CD4-positive, alpha-beta memory T cell (primary cell): ENCODE measurements at regions of chr12 and their contacts with region 1.

Region 1: DNA sequence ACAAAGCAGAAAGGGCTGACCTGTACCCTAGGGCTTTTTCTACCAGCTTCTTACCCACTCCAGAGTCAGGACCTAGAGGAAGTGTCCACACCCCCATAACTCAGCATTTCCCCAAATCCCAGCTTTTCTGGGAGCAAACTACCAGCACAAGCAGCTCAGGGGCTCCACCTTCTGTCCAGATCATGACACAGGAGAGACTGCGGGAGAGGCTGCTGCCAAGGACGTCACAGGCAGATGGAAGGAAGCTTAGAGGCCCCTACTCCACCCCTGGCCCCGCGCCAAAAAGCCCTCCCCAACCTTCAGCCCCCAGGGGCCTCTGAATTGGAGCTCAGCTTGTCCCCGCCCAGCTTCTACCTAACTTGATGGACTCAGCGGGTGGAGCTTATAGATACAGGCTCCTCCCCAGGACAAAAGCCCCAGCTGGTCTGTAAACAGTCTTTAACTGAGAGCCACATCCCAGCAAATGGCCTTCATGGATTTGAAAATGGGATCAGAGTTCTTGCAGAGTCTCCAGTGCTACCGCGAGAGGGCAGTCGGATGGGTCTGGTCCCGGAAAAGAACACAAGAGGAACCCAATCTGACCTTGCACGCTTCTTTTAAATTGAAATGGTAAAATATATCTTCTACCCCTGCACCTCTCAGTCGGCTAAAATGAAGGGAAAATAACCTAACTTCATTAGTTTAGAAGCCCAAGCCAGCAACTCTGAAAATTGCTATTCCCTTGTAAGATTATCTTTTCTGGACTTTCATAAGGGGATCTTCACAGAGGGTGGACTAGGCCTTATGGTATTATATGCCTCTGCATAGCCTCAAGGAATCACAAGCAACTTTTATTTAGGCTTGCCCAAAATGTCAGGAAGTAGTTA is 6.8 kb upstream of the BAZ2A start:
- DNase-seq: peak; percentile 93 to 99 (median 96)
- H3K4me3 ChIP-seq: peak overlapping the region; percentile 58 to 64
- H3K4me3 Mint-ChIP-seq: peak overlapping the region; percentile 86 to 99 (median 96)
- H3K27ac ChIP-seq: peak overlapping the region; percentile 81
- H3K27ac Mint-ChIP-seq: peak overlapping the region; percentile 82 to 99 (median 97)
- H3K4me1 ChIP-seq: peaks cover 44% of the 10 kb centered on the region
- H3K4me1 Mint-ChIP-seq: peaks cover 31 to 59% (median 46%) of the 10 kb centered on the region in 4 donors
- H3K27me3 ChIP-seq: no peaks in the 10 kb centered on the region
- H3K27me3 Mint-ChIP-seq: no peaks in the 10 kb centered on the region

Region 2: GRCh38 chr12:55829967-55830600 is 806.8 kb before region 1 on chr12:
- CTCF ChIA-PET with region 1: no interaction called
- POLR2A ChIA-PET with region 1: no interaction called
- intact Hi-C with region 1: loop called (anchors 10 kb)
- DNase-seq: peak in 4 of 5 donors; percentile 18 to 55 (median 22)
- H3K4me3 ChIP-seq: peak overlapping the region; percentile 88 to 93
- H3K4me3 Mint-ChIP-seq: peak overlapping the region; percentile 95 to 99 (median 98)
- H3K27ac ChIP-seq: peak overlapping the region; percentile 59
- H3K27ac Mint-ChIP-seq: peak overlapping the region; percentile 89 to 97 (median 95)
- H3K4me1 ChIP-seq: peaks cover 54% of the 10 kb centered on the region
- H3K4me1 Mint-ChIP-seq: peaks cover 28 to 66% (median 41%) of the 10 kb centered on the region in 4 donors
- H3K27me3 ChIP-seq: no peaks in the 10 kb centered on the region
- H3K27me3 Mint-ChIP-seq: no peaks in the 10 kb centered on the region

Region 3: GRCh38 chr12:56541631-56542030 is 95.3 kb before region 1 on chr12:
- CTCF ChIA-PET with region 1: no interaction called
- POLR2A ChIA-PET with region 1: no interaction called
- intact Hi-C with region 1: no loop called
- DNase-seq: no peak
- H3K4me3 ChIP-seq: no peak overlapping the region
- H3K4me3 Mint-ChIP-seq: no peak overlapping the region
- H3K27ac ChIP-seq: no peak overlapping the region
- H3K27ac Mint-ChIP-seq: no peak overlapping the region
- H3K4me1 ChIP-seq: no peaks in the 10 kb centered on the region
- H3K4me1 Mint-ChIP-seq: peaks cover 0 to 2% (median 0%) of the 10 kb centered on the region in 4 donors
- H3K27me3 ChIP-seq: no peaks in the 10 kb centered on the region
- H3K27me3 Mint-ChIP-seq: no peaks in the 10 kb centered on the region

Region 4: DNA sequence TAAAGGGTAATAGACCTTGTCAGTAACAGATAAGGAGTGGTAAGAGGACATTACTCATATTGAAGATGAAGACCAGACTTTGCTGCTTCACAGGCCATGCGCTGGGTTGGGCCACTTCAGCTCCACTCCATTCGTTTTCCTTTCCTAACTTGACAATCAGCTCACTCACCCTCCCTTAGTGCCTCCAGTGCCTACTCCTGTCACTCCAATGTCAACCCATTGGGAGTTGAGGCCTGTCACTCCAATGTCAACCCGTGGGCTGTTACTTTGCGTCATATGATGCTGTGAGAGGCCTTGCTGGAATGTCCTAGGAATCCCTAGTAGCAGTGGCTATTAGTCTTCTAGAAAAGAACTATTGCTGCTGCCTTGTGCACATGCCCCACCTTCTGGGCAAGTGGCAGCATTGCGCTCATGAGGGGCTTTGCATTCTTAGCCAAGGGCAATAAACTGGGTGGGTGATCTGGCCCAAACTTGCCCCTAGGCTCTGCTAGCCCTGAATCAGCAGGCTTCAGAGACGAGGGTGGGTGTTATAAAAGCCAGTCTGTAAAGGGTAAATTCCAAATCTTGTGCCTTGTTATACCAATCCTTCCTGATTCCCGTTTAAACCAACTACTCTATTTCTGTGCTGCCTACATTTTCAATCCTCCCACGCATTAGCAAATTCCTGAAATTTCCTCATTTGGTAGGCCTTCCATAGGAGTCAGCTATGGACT is 42.8 kb before region 1 on chr12:
- CTCF ChIA-PET with region 1: interaction called, 30 read pairs
- POLR2A ChIA-PET with region 1: interaction called, 4 read pairs
- intact Hi-C with region 1: no loop called
- DNase-seq: peak; percentile 44 to 71 (median 53)
- H3K4me3 ChIP-seq: no peak overlapping the region
- H3K4me3 Mint-ChIP-seq: no peak overlapping the region
- H3K27ac ChIP-seq: no peak overlapping the region
- H3K27ac Mint-ChIP-seq: peak overlapping the region in 3 of 7 donors; percentile 2 to 77 (median 49)
- H3K4me1 ChIP-seq: no peaks in the 10 kb centered on the region
- H3K4me1 Mint-ChIP-seq: peaks cover 0 to 4% (median 2%) of the 10 kb centered on the region in 4 donors
- H3K27me3 ChIP-seq: no peaks in the 10 kb centered on the region
- H3K27me3 Mint-ChIP-seq: no peaks in the 10 kb centered on the region

Region 5: DNA sequence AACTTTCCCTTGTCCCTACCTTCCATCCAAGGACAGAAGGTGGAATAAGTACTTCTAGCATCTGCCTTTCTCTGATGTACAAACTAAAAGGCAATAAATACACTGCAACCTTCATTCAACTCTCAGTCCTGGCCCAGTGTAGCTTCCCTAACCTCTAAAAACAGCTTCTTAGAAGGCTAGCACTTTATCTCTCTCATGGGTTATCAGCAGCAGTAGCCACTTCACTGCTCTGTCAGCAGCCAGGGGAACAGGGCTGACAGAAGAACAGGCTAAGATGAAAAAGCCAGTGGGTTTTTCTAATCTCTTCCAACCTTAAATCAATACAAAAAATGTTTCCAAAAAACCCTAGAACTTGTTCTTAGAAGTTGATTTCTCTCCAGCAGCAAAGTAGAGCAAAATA is 20.0 kb before region 1 on chr12:
- CTCF ChIA-PET with region 1: interaction called, 68 read pairs
- POLR2A ChIA-PET with region 1: interaction called, 67 read pairs
- intact Hi-C with region 1: no loop called
- DNase-seq: no peak
- H3K4me3 ChIP-seq: no peak overlapping the region
- H3K4me3 Mint-ChIP-seq: no peak overlapping the region
- H3K27ac ChIP-seq: no peak overlapping the region
- H3K27ac Mint-ChIP-seq: peak overlapping the region in 3 of 7 donors; percentile 23 to 66 (median 48)
- H3K4me1 ChIP-seq: peaks cover 21% of the 10 kb centered on the region
- H3K4me1 Mint-ChIP-seq: peaks cover 15 to 40% (median 24%) of the 10 kb centered on the region in 4 donors
- H3K27me3 ChIP-seq: no peaks in the 10 kb centered on the region
- H3K27me3 Mint-ChIP-seq: no peaks in the 10 kb centered on the region

Region 6: GRCh38 chr12:56677680-56678079 is 40.8 kb after region 1 on chr12:
- CTCF ChIA-PET with region 1: interaction called, 40 read pairs
- POLR2A ChIA-PET with region 1: interaction called, 210 read pairs
- intact Hi-C with region 1: no loop called
- DNase-seq: no peak
- H3K4me3 ChIP-seq: no peak overlapping the region
- H3K4me3 Mint-ChIP-seq: peak overlapping the region in 4 of 8 donors; percentile 2 to 44 (median 30)
- H3K27ac ChIP-seq: no peak overlapping the region
- H3K27ac Mint-ChIP-seq: peak overlapping the region in 5 of 7 donors; percentile 51 to 77 (median 53)
- H3K4me1 ChIP-seq: peaks cover 93% of the 10 kb centered on the region
- H3K4me1 Mint-ChIP-seq: peaks cover 40 to 86% (median 62%) of the 10 kb centered on the region in 4 donors
- H3K27me3 ChIP-seq: no peaks in the 10 kb centered on the region
- H3K27me3 Mint-ChIP-seq: no peaks in the 10 kb centered on the region

Region 7: DNA sequence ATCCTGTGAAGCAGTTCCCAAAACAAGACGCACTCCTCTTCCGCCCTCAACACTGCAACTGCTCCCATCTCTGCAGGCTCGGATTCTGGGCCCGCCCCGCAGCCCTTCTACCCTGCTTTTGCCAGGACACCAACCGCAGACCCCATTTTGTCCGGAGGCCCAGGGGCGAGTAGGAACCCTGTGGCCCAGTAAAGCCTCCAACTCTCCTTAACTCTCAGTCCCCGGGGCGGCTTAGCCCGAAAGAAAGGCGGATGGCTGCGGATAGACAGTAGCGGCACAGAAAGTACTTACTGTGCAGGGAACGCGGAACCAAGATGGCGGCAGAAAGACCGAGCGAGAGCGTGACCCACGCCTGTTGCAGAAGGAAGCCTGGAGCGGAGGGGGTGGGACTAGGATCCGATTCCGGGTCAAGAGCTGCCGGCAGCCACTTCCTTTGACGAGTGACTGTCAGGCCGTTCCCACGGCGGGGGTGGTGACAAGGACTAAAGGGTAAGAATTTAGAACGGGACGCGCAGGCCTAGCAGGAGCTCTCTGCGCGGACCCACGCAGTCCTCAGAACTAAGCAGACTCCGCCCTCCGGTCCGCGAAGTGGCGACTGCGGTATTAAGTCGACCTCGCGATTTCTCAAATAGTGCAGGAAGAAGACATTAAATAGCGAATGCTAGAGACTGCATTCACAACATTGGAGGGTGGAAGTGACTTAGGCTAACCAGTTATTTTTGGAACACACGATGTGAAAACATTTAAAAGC is 88.2 kb after region 1 on chr12 and contains the start of gene NACA:
- CTCF ChIA-PET with region 1: interaction called, 8 read pairs
- POLR2A ChIA-PET with region 1: interaction called, 21 read pairs
- intact Hi-C with region 1: loop called (anchors 2 kb)
- DNase-seq: peak; percentile 94 to 100 (median 98)
- H3K4me3 ChIP-seq: peak within 1 kb of the TSS; percentile 90 to 100
- H3K4me3 Mint-ChIP-seq: peak within 1 kb of the TSS; percentile 90 to 99 (median 98)
- H3K27ac ChIP-seq: peak within 1 kb of the TSS; percentile 90
- H3K27ac Mint-ChIP-seq: peak within 1 kb of the TSS; percentile 92 to 99 (median 97)
- H3K4me1 ChIP-seq: peaks cover 54% of the 10 kb centered on the region
- H3K4me1 Mint-ChIP-seq: peaks cover 41 to 66% (median 51%) of the 10 kb centered on the region in 4 donors
- H3K27me3 ChIP-seq: no peaks in the 10 kb centered on the region
- H3K27me3 Mint-ChIP-seq: no peaks in the 10 kb centered on the region
- total RNA-seq, gene NACA: 1,184 to 1,255 TPM

Region 8: DNA sequence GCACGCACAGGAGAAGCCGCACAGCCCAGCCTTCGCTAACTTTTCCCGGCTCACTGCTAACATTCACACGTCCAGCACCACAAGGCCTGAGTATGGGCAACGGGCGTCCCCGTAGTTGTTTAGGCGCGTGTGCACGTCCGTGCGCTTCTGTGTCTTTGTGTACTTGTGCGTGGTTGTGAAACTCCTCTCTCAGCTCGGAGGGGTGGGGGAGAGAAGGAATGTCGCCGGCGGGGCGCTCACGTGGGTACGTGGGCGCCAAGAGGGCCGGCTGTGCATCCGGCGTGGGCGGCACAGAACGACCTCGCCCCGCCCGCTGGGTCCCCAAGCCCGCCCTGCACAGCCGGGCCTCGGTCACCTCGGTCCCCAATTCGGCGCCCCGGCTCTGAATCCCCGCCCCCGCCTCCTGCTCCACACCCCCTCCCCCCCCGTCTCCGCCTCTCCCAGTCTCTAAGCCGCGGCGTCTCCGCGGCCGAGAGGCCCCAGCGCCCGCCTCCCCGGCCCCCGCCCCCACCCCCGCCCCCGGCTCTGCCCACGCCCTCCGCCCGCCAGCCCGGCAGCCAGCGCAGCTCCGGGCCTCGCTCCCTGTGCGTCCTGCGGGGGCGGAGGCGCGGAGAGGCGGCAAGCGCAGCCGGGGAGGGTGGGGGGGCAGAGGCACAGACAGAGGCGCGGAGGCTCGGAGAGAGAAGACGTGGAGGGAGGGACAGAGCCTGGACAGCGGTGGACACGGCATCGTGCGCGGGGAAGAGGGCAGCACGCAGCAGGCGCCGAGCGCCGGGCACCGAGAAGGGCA is 451.7 kb after region 1 on chr12 and contains the start of gene NAB2:
- CTCF ChIA-PET with region 1: no interaction called
- POLR2A ChIA-PET with region 1: interaction called, 3 read pairs
- intact Hi-C with region 1: loop called (anchors 5 kb)
- DNase-seq: peak; percentile 89 to 94 (median 92)
- H3K4me3 ChIP-seq: peak within 1 kb of the TSS; percentile 90 to 91
- H3K4me3 Mint-ChIP-seq: peak within 1 kb of the TSS; percentile 92 to 98 (median 95)
- H3K27ac ChIP-seq: peak within 1 kb of the TSS; percentile 97
- H3K27ac Mint-ChIP-seq: peak within 1 kb of the TSS; percentile 97 to 99 (median 98)
- H3K4me1 ChIP-seq: peaks cover 52% of the 10 kb centered on the region
- H3K4me1 Mint-ChIP-seq: peaks cover 40 to 78% (median 53%) of the 10 kb centered on the region in 4 donors
- H3K27me3 ChIP-seq: no peaks in the 10 kb centered on the region
- H3K27me3 Mint-ChIP-seq: no peaks in the 10 kb centered on the region
- total RNA-seq, gene NAB2: 17.5 to 19.5 TPM